ENCODE measurements at regions of chr14 and their contacts with region 1.

Region 1: GRCh38 chr14:55270832-55271565 is at the start of gene FBXO34:
- DNase-seq: peak; percentile 97 to 99
- H3K4me3 ChIP-seq: peak within 1 kb of the TSS; percentile 100
- H3K4me3 Mint-ChIP-seq: peak within 1 kb of the TSS; percentile 84
- H3K27ac Mint-ChIP-seq: peak within 1 kb of the TSS; percentile 94
- H3K4me1 ChIP-seq: peaks cover 45% of the 10 kb centered on the region
- H3K4me1 Mint-ChIP-seq: peaks cover 32% of the 10 kb centered on the region
- H3K27me3 ChIP-seq: no peaks in the 10 kb centered on the region
- H3K27me3 Mint-ChIP-seq: no peaks in the 10 kb centered on the region
- CTCF ChIP-seq: peak; percentile 98
- total RNA-seq, gene FBXO34: 23.7 and 27.3 TPM in 2 replicates

Region 2: GRCh38 chr14:55212634-55213033 is 58.4 kb before region 1 on chr14:
- CTCF ChIA-PET with region 1: interaction called, 4 read pairs
- POLR2A ChIA-PET with region 1: no interaction called
- intact Hi-C with region 1: loop called (anchors 1 kb)
- DNase-seq: no peak
- H3K4me3 ChIP-seq: no peak overlapping the region
- H3K4me3 Mint-ChIP-seq: no peak overlapping the region
- H3K27ac Mint-ChIP-seq: no peak overlapping the region
- H3K4me1 ChIP-seq: no peaks in the 10 kb centered on the region
- H3K4me1 Mint-ChIP-seq: peaks cover 13% of the 10 kb centered on the region
- H3K27me3 ChIP-seq: no peaks in the 10 kb centered on the region
- H3K27me3 Mint-ChIP-seq: no peaks in the 10 kb centered on the region
- CTCF ChIP-seq: no peak

Region 3: GRCh38 chr14:55316567-55316966 is 45.6 kb after region 1 on chr14:
- CTCF ChIA-PET with region 1: interaction called, 4 read pairs
- POLR2A ChIA-PET with region 1: no interaction called
- intact Hi-C with region 1: loop called (anchors 1 kb)
- DNase-seq: peak; percentile 76 to 85
- H3K4me3 ChIP-seq: no peak overlapping the region
- H3K4me3 Mint-ChIP-seq: peak overlapping the region; percentile 46
- H3K27ac Mint-ChIP-seq: peak overlapping the region; percentile 72
- H3K4me1 ChIP-seq: peaks cover 40% of the 10 kb centered on the region
- H3K4me1 Mint-ChIP-seq: peaks cover 13% of the 10 kb centered on the region
- H3K27me3 ChIP-seq: no peaks in the 10 kb centered on the region
- H3K27me3 Mint-ChIP-seq: no peaks in the 10 kb centered on the region
- CTCF ChIP-seq: no peak